Activated CD4-positive, alpha-beta T cell treated with anti-CD3 and anti-CD28 coated beads, Interleukin-2, amount 10 ng/mL, durations not matched to agents 24 days and 14 days (primary cell): ENCODE measurements at regions of chrX and their contacts with region 1.

Region 1: GRCh38 chrX:22063284-22063683 is 31.2 kb downstream of the PHEX start:
- DNase-seq: peak; percentile 55
- H3K4me3 Mint-ChIP-seq: peak overlapping the region; percentile 39
- H3K27ac Mint-ChIP-seq: peak overlapping the region; percentile 97
- H3K4me1 Mint-ChIP-seq: peaks cover 47% of the 10 kb centered on the region
- H3K27me3 Mint-ChIP-seq: no peaks in the 10 kb centered on the region

Region 2: GRCh38 chrX:21940356-21940829 is 122.9 kb before region 1 on chrX and contains the start of gene SMS:
- intact Hi-C with region 1: loop called (anchors 2 kb)
- DNase-seq: peak; percentile 81
- H3K4me3 Mint-ChIP-seq: peak within 1 kb of the TSS; percentile 90
- H3K27ac Mint-ChIP-seq: peak within 1 kb of the TSS; percentile 91
- H3K4me1 Mint-ChIP-seq: peaks cover 19% of the 10 kb centered on the region
- H3K27me3 Mint-ChIP-seq: no peaks in the 10 kb centered on the region
- total RNA-seq, gene SMS: 161 and 162 TPM in 2 replicates

Region 3: GRCh38 chrX:22025751-22026150 is 37.5 kb before region 1 on chrX:
- intact Hi-C with region 1: loop called (anchors 5 kb)
- DNase-seq: no peak
- H3K4me3 Mint-ChIP-seq: no peak overlapping the region
- H3K27ac Mint-ChIP-seq: no peak overlapping the region
- H3K4me1 Mint-ChIP-seq: peaks cover 11% of the 10 kb centered on the region
- H3K27me3 Mint-ChIP-seq: no peaks in the 10 kb centered on the region

Region 4: DNA sequence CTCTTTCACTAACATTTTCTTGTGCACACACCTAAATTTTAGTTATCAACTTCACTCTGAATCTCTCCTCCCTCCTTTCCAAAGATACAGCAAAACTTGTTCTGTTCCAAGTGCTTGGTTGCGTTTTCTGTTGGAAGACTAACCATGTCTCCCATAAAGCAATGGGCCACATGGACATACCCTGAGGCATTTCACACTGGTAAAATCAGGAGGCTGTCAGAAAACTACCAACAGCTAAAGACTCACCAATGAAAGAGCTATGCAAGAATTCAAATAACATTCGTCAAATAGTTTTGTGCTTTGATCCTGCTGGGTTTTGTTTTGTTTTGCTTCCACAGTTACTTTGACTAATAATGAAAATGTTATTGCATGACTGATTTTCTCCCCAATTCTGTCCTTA is 14.8 kb after region 1 on chrX:
- intact Hi-C with region 1: no loop called
- DNase-seq: no peak
- H3K4me3 Mint-ChIP-seq: no peak overlapping the region
- H3K27ac Mint-ChIP-seq: peak overlapping the region; percentile 82
- H3K4me1 Mint-ChIP-seq: peaks cover 6% of the 10 kb centered on the region
- H3K27me3 Mint-ChIP-seq: no peaks in the 10 kb centered on the region

Region 5: GRCh38 chrX:22088326-22088725 is 25.0 kb after region 1 on chrX:
- intact Hi-C with region 1: loop called (anchors 1 kb)
- DNase-seq: no peak
- H3K4me3 Mint-ChIP-seq: no peak overlapping the region
- H3K27ac Mint-ChIP-seq: peak overlapping the region; percentile 86
- H3K4me1 Mint-ChIP-seq: peaks cover 12% of the 10 kb centered on the region
- H3K27me3 Mint-ChIP-seq: no peaks in the 10 kb centered on the region

Region 6: DNA sequence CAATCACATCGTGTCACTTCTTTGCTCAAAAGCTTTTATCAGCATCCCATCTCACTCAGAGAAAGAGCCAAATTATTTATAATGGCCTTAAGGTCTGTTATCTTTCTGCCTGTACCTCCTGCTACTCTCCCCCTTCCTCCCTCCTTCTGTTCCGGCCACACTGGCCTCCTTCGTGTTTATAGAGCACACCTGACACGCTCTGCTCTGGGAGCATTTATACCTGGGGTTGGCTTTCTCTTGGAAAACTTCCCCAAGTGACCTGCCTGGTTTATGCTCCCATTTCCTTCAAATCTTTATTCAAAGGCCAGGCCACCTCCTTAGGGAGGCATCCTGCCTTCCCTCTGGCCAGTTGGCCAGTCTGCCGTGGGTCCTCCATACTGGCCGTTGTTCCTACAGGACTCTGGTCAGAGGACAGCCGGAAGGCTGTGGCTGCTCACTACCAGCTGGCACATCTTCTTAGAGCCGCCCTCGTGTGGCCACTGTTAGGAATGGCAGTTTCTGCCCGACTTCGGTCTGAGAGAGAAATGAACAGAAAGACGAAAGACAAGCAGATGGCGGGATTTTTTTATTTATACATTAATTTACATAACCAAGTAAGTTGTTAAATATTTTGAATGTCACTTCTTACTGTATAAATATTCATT is 129.3 kb after region 1 on chrX:
- intact Hi-C with region 1: loop called (anchors 10 kb)
- DNase-seq: peak; percentile 82
- H3K4me3 Mint-ChIP-seq: peak overlapping the region; percentile 17
- H3K27ac Mint-ChIP-seq: no peak overlapping the region
- H3K4me1 Mint-ChIP-seq: peaks cover 3% of the 10 kb centered on the region
- H3K27me3 Mint-ChIP-seq: no peaks in the 10 kb centered on the region

Region 7: DNA sequence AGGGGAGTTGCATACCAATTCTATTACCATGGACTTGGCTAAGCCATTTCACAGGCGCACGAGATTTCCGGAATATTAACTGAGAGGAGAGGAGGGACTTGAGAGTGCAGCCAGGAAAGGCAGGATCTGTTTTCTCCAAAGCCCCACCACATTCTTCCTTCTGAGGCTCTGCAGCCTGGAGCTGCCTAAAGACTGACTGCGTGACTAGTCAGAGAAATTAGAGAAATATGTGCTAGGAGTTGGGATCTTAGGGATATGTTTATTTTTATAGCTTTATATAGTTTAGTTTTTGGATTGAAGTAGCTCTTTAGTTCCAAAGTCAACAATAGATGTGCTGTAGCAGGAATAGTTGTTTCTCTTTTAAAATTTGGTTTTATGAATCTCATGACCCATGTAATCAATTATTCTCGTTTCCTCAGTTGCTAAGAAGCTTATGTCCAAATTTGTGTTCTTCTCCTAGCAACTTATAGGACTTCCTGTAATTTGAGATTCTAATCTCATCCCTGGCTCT is 636.4 kb after region 1 on chrX:
- intact Hi-C with region 1: no loop called
- DNase-seq: no peak
- H3K4me3 Mint-ChIP-seq: no peak overlapping the region
- H3K27ac Mint-ChIP-seq: no peak overlapping the region
- H3K4me1 Mint-ChIP-seq: no peaks in the 10 kb centered on the region
- H3K27me3 Mint-ChIP-seq: no peaks in the 10 kb centered on the region